CD8-positive, alpha-beta T cell (primary cell): ENCODE measurements at regions of chr15 and their contacts with region 1.

Region 1: GRCh38 chr15:88246666-88247446 is 9.7 kb downstream of the NTRK3 start:
- DNase-seq: peak; percentile 36 to 84 (median 73)
- ATAC-seq: peak; percentile 71
- H3K4me3 ChIP-seq: no peak overlapping the region
- H3K4me3 Mint-ChIP-seq: peak overlapping the region; percentile 15
- H3K27ac ChIP-seq: no peak overlapping the region
- H3K27ac Mint-ChIP-seq: no peak overlapping the region
- H3K4me1 ChIP-seq: no peaks in the 10 kb centered on the region
- H3K4me1 Mint-ChIP-seq: peaks cover 6% of the 10 kb centered on the region
- H3K27me3 ChIP-seq: no peaks in the 10 kb centered on the region
- H3K27me3 Mint-ChIP-seq: peaks cover 13% of the 10 kb centered on the region
- CTCF ChIP-seq: peak; percentile 76

Region 2: GRCh38 chr15:86624261-86625036 is 1622.4 kb before region 1 on chr15:
- CTCF ChIA-PET with region 1: no interaction called
- POLR2A ChIA-PET with region 1: no interaction called
- intact Hi-C with region 1: loop called in 1 of 2 experiments (anchors 5 kb)
- DNase-seq: peak; percentile 1 to 72 (median 55)
- ATAC-seq: peak; percentile 66
- H3K4me3 ChIP-seq: no peak overlapping the region
- H3K4me3 Mint-ChIP-seq: no peak overlapping the region
- H3K27ac ChIP-seq: no peak overlapping the region
- H3K27ac Mint-ChIP-seq: no peak overlapping the region
- H3K4me1 ChIP-seq: peaks cover 7% of the 10 kb centered on the region
- H3K4me1 Mint-ChIP-seq: peaks cover 20% of the 10 kb centered on the region
- H3K27me3 ChIP-seq: no peaks in the 10 kb centered on the region
- H3K27me3 Mint-ChIP-seq: peaks cover 2% of the 10 kb centered on the region
- CTCF ChIP-seq: no peak

Region 3: GRCh38 chr15:87764461-87765240 is 482.2 kb before region 1 on chr15:
- CTCF ChIA-PET with region 1: no interaction called
- POLR2A ChIA-PET with region 1: no interaction called
- intact Hi-C with region 1: no loop called
- DNase-seq: no peak
- ATAC-seq: no peak
- H3K4me3 ChIP-seq: no peak overlapping the region
- H3K4me3 Mint-ChIP-seq: no peak overlapping the region
- H3K27ac ChIP-seq: no peak overlapping the region
- H3K27ac Mint-ChIP-seq: no peak overlapping the region
- H3K4me1 ChIP-seq: peaks cover 9% of the 10 kb centered on the region
- H3K4me1 Mint-ChIP-seq: peaks cover 11% of the 10 kb centered on the region
- H3K27me3 ChIP-seq: no peaks in the 10 kb centered on the region
- H3K27me3 Mint-ChIP-seq: peaks cover 3% of the 10 kb centered on the region
- CTCF ChIP-seq: no peak

Region 4: GRCh38 chr15:88090481-88091385 is 156.1 kb before region 1 on chr15:
- CTCF ChIA-PET with region 1: no interaction called
- POLR2A ChIA-PET with region 1: no interaction called
- intact Hi-C with region 1: no loop called
- DNase-seq: no peak
- ATAC-seq: no peak
- H3K4me3 ChIP-seq: no peak overlapping the region
- H3K4me3 Mint-ChIP-seq: no peak overlapping the region
- H3K27ac ChIP-seq: no peak overlapping the region
- H3K27ac Mint-ChIP-seq: no peak overlapping the region
- H3K4me1 ChIP-seq: no peaks in the 10 kb centered on the region
- H3K4me1 Mint-ChIP-seq: no peaks in the 10 kb centered on the region
- H3K27me3 ChIP-seq: no peaks in the 10 kb centered on the region
- H3K27me3 Mint-ChIP-seq: no peaks in the 10 kb centered on the region
- CTCF ChIP-seq: no peak

Region 5: GRCh38 chr15:88231909-88232644 is 14.8 kb before region 1 on chr15:
- CTCF ChIA-PET with region 1: interaction called, 26 read pairs
- POLR2A ChIA-PET with region 1: no interaction called
- intact Hi-C with region 1: no loop called
- DNase-seq: no peak
- ATAC-seq: no peak
- H3K4me3 ChIP-seq: no peak overlapping the region
- H3K4me3 Mint-ChIP-seq: no peak overlapping the region
- H3K27ac ChIP-seq: no peak overlapping the region
- H3K27ac Mint-ChIP-seq: no peak overlapping the region
- H3K4me1 ChIP-seq: no peaks in the 10 kb centered on the region
- H3K4me1 Mint-ChIP-seq: no peaks in the 10 kb centered on the region
- H3K27me3 ChIP-seq: peaks cover 0 to 2% of the 10 kb centered on the region in 2 experiments
- H3K27me3 Mint-ChIP-seq: peaks cover 25% of the 10 kb centered on the region
- CTCF ChIP-seq: no peak

Region 6: DNA sequence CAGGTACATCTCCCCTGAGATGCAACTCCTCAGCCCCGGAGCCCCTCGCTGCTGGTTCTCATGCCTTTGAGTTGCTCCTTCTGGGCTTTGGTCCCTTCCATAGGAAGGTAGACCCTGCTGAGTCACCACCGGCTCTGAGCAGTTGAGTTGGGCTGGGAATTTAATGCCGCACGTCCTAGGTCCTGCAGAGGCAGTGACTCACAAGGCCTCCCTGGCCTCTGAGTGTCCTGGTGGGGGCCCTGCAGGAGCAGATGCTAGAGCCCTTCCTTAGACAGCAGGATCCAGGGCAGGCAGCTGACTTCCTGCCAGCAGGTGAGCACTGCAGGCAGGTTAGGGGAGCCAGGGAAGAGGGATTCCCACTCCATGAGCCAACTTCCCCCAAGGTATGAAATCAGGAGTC is 15.2 kb after region 1 on chr15:
- CTCF ChIA-PET with region 1: interaction called, 20 read pairs
- POLR2A ChIA-PET with region 1: no interaction called
- intact Hi-C with region 1: no loop called
- DNase-seq: no peak
- ATAC-seq: no peak
- H3K4me3 ChIP-seq: no peak overlapping the region
- H3K4me3 Mint-ChIP-seq: no peak overlapping the region
- H3K27ac ChIP-seq: no peak overlapping the region
- H3K27ac Mint-ChIP-seq: no peak overlapping the region
- H3K4me1 ChIP-seq: no peaks in the 10 kb centered on the region
- H3K4me1 Mint-ChIP-seq: peaks cover 7% of the 10 kb centered on the region
- H3K27me3 ChIP-seq: peaks cover 0 to 4% of the 10 kb centered on the region in 2 experiments
- H3K27me3 Mint-ChIP-seq: peaks cover 57% of the 10 kb centered on the region
- CTCF ChIP-seq: no peak

Region 7: GRCh38 chr15:88269356-88270062 is 22.7 kb after region 1 on chr15:
- CTCF ChIA-PET with region 1: interaction called, 10 read pairs
- POLR2A ChIA-PET with region 1: no interaction called
- intact Hi-C with region 1: no loop called
- DNase-seq: no peak
- ATAC-seq: no peak
- H3K4me3 ChIP-seq: no peak overlapping the region
- H3K4me3 Mint-ChIP-seq: no peak overlapping the region
- H3K27ac ChIP-seq: no peak overlapping the region
- H3K27ac Mint-ChIP-seq: no peak overlapping the region
- H3K4me1 ChIP-seq: no peaks in the 10 kb centered on the region
- H3K4me1 Mint-ChIP-seq: no peaks in the 10 kb centered on the region
- H3K27me3 ChIP-seq: no peaks in the 10 kb centered on the region
- H3K27me3 Mint-ChIP-seq: peaks cover 20% of the 10 kb centered on the region
- CTCF ChIP-seq: no peak

Region 8: GRCh38 chr15:88284318-88284998 is 37.6 kb after region 1 on chr15:
- CTCF ChIA-PET with region 1: no interaction called
- POLR2A ChIA-PET with region 1: no interaction called
- intact Hi-C with region 1: no loop called
- DNase-seq: no peak
- ATAC-seq: no peak
- H3K4me3 ChIP-seq: no peak overlapping the region
- H3K4me3 Mint-ChIP-seq: no peak overlapping the region
- H3K27ac ChIP-seq: no peak overlapping the region
- H3K27ac Mint-ChIP-seq: no peak overlapping the region
- H3K4me1 ChIP-seq: no peaks in the 10 kb centered on the region
- H3K4me1 Mint-ChIP-seq: no peaks in the 10 kb centered on the region
- H3K27me3 ChIP-seq: peaks cover 0 to 9% of the 10 kb centered on the region in 2 experiments
- H3K27me3 Mint-ChIP-seq: peaks cover 48% of the 10 kb centered on the region
- CTCF ChIP-seq: no peak